CD8-positive, alpha-beta T cell (primary cell): ENCODE measurements at regions of chr16 and their contacts with region 1.

Region 1: DNA sequence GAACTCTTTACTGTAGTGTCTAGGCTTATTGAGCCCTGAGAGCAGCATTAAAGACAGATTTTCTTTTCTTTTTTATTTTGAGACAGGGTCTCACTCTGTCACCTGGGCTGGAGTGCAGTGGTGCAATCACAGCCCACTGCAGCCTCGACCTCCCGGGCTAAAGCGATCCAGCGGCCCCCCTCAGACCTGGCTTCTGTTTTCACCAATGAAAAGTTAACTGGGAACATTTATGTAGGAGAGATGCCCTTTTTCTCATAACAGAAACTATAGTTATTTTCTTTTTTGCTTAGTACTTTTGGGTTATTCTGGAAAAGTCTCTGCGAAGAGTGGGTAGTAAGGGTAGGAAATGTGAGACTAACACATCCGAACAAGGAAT is 1.5 kb downstream of the MAP1LC3B start:
- DNase-seq: no peak
- ATAC-seq: no peak
- H3K4me3 ChIP-seq: peak overlapping the region; percentile 40 to 69
- H3K4me3 Mint-ChIP-seq: peak overlapping the region; percentile 93
- H3K27ac ChIP-seq: peak overlapping the region in 1 of 2 experiments; percentile 60
- H3K27ac Mint-ChIP-seq: peak overlapping the region; percentile 96
- H3K4me1 ChIP-seq: peaks cover 33% of the 10 kb centered on the region
- H3K4me1 Mint-ChIP-seq: peaks cover 48% of the 10 kb centered on the region
- H3K27me3 ChIP-seq: no peaks in the 10 kb centered on the region
- H3K27me3 Mint-ChIP-seq: no peaks in the 10 kb centered on the region
- CTCF ChIP-seq: no peak

Region 2: DNA sequence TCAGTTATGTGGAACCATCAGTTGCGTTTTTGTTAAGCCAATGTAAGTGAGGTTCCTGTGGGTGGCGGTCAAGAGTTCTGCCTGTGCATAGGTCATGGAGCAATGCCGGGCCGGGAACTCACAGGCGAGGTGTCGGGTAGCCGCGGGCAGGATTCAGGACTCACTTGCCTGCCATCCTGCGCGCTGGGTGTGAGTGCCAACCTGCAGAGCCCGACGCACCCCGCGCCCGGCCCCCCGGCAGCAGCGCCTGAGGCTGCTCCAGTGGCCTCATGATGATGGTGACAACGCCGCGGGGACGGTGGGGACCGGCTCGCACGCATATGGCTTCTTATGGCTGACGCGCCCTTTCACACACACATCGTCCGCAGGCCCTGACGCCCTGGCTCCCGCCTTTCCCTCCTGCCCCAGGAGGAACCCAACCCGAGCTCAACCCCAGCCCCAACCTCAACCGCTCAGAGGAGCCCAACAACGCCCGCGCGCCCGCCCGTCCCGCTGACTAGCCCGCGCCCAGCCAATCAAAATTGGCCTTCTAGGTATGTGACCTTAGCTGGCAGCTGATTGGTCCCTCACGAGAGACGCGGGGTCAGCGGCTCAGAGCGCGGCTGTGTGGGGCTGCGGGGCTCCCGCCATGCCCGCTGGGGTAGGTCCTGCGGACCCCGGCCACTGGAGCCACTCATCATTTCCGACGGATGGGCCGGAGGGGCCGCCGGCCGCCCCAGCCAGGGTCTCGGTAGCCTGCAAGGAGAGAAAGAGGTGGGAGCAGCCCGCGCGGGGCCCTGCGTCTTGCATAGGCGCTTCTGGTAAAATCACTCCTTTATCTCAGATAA is 76.5 kb before region 1 on chr16 and contains the start of gene C16orf95:
- CTCF ChIA-PET with region 1: interaction called, 32 read pairs
- POLR2A ChIA-PET with region 1: interaction called, 7 read pairs
- intact Hi-C with region 1: loop called (anchors 1 kb)
- DNase-seq: peak; percentile 93 to 99 (median 97)
- ATAC-seq: peak; percentile 89
- H3K4me3 ChIP-seq: peak within 1 kb of the TSS; percentile 92 to 99
- H3K4me3 Mint-ChIP-seq: peak within 1 kb of the TSS; percentile 94
- H3K27ac ChIP-seq: peak within 1 kb of the TSS; percentile 76 to 81
- H3K27ac Mint-ChIP-seq: peak within 1 kb of the TSS; percentile 95
- H3K4me1 ChIP-seq: peaks cover 8% of the 10 kb centered on the region
- H3K4me1 Mint-ChIP-seq: peaks cover 14% of the 10 kb centered on the region
- H3K27me3 ChIP-seq: no peaks in the 10 kb centered on the region
- H3K27me3 Mint-ChIP-seq: no peaks in the 10 kb centered on the region
- CTCF ChIP-seq: peak; percentile 42
- total RNA-seq, gene C16orf95: 0.76 to 1.2 TPM

Region 3: DNA sequence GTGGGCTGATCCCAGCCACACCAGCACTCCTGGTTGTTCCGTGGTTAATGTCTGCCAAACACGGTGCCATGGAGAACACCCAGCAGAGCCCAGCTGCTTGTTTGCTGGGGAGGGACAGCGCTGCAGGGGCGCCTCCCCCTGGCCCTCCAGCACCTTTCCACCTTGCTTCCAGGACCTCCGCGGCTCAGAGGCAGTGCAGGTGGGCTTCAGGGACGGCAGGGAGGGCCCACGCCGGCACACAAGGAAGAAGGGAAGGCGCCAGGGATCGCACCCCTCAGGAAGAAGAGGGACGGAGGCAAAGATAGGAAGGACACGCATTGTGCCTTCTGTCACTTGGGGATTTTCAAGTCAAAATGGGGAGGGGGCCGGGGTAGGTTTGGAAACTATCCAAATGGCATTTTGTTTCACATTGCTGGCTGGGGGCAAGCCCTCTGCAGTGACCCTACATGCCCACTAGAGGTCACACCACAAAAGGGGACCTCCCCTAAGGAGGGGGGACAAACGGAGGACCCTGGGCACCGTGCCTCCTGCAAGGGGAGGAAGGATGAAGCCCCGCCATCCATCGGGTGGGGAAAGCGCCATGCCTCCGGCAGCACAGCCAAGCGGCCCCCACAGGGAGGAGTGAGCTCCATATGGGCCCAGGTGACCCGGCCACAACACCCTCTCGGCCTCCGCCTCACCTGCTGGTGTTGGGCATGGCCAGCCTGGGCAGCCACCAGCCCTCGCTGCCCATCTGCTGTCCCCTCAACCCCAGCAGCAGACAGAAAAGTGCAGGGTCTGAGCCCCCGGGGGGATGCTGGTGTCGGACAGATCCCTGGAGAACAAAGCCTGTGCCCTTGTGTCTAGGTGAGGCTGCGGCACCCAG is 69.0 kb before region 1 on chr16:
- CTCF ChIA-PET with region 1: interaction called, 32 read pairs
- POLR2A ChIA-PET with region 1: no interaction called
- intact Hi-C with region 1: loop called (anchors 1 kb)
- DNase-seq: peak in 8 of 9 experiments; percentile 17 to 67 (median 56)
- ATAC-seq: peak; percentile 95
- H3K4me3 ChIP-seq: no peak overlapping the region
- H3K4me3 Mint-ChIP-seq: no peak overlapping the region
- H3K27ac ChIP-seq: no peak overlapping the region
- H3K27ac Mint-ChIP-seq: no peak overlapping the region
- H3K4me1 ChIP-seq: peaks cover 3% of the 10 kb centered on the region
- H3K4me1 Mint-ChIP-seq: peaks cover 7% of the 10 kb centered on the region
- H3K27me3 ChIP-seq: no peaks in the 10 kb centered on the region
- H3K27me3 Mint-ChIP-seq: no peaks in the 10 kb centered on the region
- CTCF ChIP-seq: peak; percentile 80